ENCODE measurements at regions of chr16 and their contacts with region 1.

Region 1: DNA sequence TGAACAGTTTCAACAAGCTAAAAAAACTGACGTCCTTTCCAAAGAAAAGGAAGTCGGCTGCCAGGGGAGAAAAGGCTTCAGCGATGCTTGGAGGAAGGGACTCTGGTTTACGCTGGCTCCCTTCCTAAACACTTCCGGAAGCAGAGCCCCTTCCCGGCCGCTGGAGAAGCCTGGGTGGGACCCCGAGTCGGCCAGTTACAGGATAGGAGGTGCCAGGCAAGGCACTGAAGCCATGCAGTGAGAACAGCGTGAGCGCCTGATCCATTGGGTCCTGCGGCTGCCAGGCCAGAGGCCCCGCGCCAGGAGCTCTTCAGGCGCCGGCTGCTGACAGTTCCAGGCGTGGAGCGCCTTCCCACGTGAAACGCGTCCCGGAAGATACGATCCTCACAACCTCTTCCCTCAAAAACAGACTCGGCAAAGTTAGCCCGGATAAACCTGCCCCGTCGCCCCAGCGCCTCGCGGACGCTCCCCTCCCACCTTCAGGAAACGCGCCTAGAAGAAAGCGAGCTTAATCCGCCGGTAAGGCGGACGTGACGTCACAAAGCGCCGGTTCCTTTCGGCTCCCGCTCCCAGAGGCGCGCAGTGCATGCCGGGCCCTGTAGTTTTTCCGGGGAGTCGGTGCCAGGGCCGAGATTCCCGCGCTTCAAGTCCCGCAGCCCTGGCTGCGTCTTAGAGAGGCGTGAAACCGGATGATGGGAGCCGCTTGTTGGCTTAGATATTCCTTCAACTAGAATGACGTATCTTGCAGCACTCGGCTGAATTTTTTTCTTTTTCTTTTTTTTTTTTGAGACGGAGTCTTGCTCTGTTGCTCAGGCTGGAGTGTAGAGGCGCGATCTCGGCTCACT is at the start of gene ADAT1:
- DNase-seq: peak; percentile 99
- H3K4me3 Mint-ChIP-seq: peak within 1 kb of the TSS; percentile 95
- H3K27ac Mint-ChIP-seq: peak within 1 kb of the TSS; percentile 95
- H3K4me1 Mint-ChIP-seq: peaks cover 39% of the 10 kb centered on the region
- H3K27me3 Mint-ChIP-seq: no peaks in the 10 kb centered on the region
- total RNA-seq, gene ADAT1: 45.3 to 47.5 TPM

Region 2: GRCh38 chr16:74296432-74297144 is 1326.4 kb before region 1 on chr16 and contains the start of gene PSMD7:
- CTCF ChIA-PET with region 1: no interaction called
- intact Hi-C with region 1: loop called (anchors 2 kb)
- DNase-seq: peak; percentile 93
- H3K4me3 Mint-ChIP-seq: peak within 1 kb of the TSS; percentile 92
- H3K27ac Mint-ChIP-seq: peak within 1 kb of the TSS; percentile 93
- H3K4me1 Mint-ChIP-seq: peaks cover 32% of the 10 kb centered on the region
- H3K27me3 Mint-ChIP-seq: no peaks in the 10 kb centered on the region
- total RNA-seq, gene PSMD7: 113 to 114 TPM

Region 3: GRCh38 chr16:75148311-75149195 is 474.4 kb before region 1 on chr16 and contains the start of gene ZFP1:
- CTCF ChIA-PET with region 1: no interaction called
- intact Hi-C with region 1: loop called (anchors 2 kb)
- DNase-seq: peak; percentile 97
- H3K4me3 Mint-ChIP-seq: peak within 1 kb of the TSS; percentile 80
- H3K27ac Mint-ChIP-seq: peak within 1 kb of the TSS; percentile 73
- H3K4me1 Mint-ChIP-seq: peaks cover 37% of the 10 kb centered on the region
- H3K27me3 Mint-ChIP-seq: no peaks in the 10 kb centered on the region
- total RNA-seq, gene ZFP1: 20.2 to 20.9 TPM

Region 4: GRCh38 chr16:75392911-75393310 is 230.1 kb before region 1 on chr16:
- CTCF ChIA-PET with region 1: no interaction called
- intact Hi-C with region 1: no loop called
- DNase-seq: no peak
- H3K4me3 Mint-ChIP-seq: no peak overlapping the region
- H3K27ac Mint-ChIP-seq: no peak overlapping the region
- H3K4me1 Mint-ChIP-seq: peaks cover 1% of the 10 kb centered on the region
- H3K27me3 Mint-ChIP-seq: no peaks in the 10 kb centered on the region

Region 5: DNA sequence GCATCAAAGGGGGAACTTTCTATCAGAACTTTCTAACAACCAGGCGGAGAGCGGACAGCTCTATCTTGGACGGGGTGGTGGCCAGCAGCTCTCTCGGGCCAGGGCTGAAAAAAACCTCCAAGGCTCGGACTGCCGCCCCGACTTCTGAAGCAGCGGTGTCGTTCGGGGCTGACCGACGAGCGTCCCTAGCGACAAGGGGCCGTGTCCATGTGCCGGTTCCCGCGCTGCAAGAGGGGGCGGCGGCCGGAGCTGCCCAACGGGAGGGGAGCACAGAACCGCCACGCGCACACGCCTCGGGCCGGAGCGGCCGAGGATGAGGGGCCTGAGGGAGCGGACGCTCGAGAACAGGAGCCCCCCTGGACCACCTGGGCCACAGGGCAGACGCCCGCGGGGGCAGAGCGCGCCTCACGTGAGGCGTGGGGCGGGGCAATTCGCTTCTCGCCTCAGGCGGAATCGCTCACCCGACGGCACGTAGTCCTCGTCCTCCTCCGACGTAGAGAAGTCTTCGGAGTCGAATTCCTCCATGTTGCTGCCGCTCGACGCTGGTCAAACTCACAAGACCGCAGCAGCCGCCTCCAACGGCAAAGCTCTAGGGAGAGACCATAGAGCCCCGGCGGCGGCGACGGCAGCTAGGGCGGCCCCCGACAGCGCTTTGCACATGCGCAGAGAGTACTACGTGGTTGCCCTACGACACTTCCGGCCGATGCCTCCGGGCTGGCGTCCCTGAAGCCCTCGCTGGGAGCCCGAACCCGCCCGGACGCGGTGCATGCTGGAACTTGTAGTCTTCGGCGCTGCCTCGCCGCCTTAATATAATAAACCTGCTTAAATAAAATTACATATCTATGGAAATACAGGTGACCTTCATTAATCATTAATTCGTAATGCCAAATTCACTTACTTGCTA is 189.9 kb before region 1 on chr16 and contains the start of gene CFDP1:
- CTCF ChIA-PET with region 1: no interaction called
- intact Hi-C with region 1: loop called (anchors 1 kb)
- DNase-seq: peak; percentile 96
- H3K4me3 Mint-ChIP-seq: peak within 1 kb of the TSS; percentile 81
- H3K27ac Mint-ChIP-seq: peak within 1 kb of the TSS; percentile 93
- H3K4me1 Mint-ChIP-seq: peaks cover 30% of the 10 kb centered on the region
- H3K27me3 Mint-ChIP-seq: no peaks in the 10 kb centered on the region
- total RNA-seq, gene CFDP1: 37.2 to 44.1 TPM

Region 6: GRCh38 chr16:75566040-75566810 is 56.8 kb before region 1 on chr16 and contains the start of gene GABARAPL2:
- CTCF ChIA-PET with region 1: interaction called, 12 read pairs
- intact Hi-C with region 1: loop called (anchors 1 kb)
- DNase-seq: peak; percentile 89
- H3K4me3 Mint-ChIP-seq: peak within 1 kb of the TSS; percentile 98
- H3K27ac Mint-ChIP-seq: peak within 1 kb of the TSS; percentile 94
- H3K4me1 Mint-ChIP-seq: peaks cover 38% of the 10 kb centered on the region
- H3K27me3 Mint-ChIP-seq: peaks cover 3% of the 10 kb centered on the region
- total RNA-seq, gene GABARAPL2: 63.3 to 66.8 TPM

Region 7: DNA sequence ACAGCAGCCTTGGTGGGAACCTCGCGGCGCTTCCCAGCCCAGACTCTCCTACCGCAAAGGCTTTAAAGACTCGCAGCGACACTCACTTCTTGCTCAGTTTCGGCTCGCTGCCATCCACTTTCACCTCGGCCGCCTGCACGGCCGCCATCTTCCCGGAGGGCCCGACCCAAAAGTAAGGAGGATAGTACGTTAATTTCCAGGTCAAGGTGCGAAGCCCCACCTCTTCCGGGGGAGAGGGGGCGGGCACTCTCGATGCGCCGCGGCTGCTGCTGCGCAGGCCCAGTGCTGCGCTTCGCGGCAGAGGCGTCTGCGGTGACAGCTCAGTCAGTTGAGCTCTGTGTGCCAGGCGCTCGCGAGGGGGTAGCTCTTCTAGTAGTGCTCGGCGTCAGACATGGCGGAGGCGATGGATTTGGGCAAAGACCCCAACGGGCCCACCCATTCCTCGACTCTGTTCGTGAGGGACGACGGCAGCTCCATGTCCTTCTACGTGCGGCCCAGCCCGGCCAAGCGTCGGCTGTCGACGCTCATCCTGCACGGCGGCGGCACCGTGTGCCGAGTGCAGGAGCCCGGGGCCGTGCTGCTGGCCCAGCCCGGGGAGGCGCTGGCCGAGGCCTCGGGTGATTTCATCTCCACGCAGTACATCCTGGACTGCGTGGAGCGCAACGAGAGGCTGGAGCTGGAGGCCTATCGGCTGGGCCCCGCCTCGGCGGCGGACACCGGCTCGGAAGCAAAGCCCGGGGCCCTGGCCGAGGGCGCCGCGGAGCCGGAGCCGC is 24.7 kb after region 1 on chr16 and contains the starts of genes KARS1 and TERF2IP:
- CTCF ChIA-PET with region 1: interaction called, 10 read pairs
- intact Hi-C with region 1: loop called (anchors 1 kb)
- DNase-seq: peak; percentile 96
- H3K4me3 Mint-ChIP-seq: peak within 1 kb of the TSS; percentile 96
- H3K27ac Mint-ChIP-seq: peak within 1 kb of the TSS; percentile 98
- H3K4me1 Mint-ChIP-seq: peaks cover 62% of the 10 kb centered on the region
- H3K27me3 Mint-ChIP-seq: no peaks in the 10 kb centered on the region
- total RNA-seq, gene KARS1: 371 to 385 TPM
- total RNA-seq, gene TERF2IP: 78.6 to 79.0 TPM

Region 8: GRCh38 chr16:75695704-75696103 is 72.7 kb after region 1 on chr16:
- CTCF ChIA-PET with region 1: no interaction called
- intact Hi-C with region 1: no loop called
- DNase-seq: no peak
- H3K4me3 Mint-ChIP-seq: no peak overlapping the region
- H3K27ac Mint-ChIP-seq: no peak overlapping the region
- H3K4me1 Mint-ChIP-seq: no peaks in the 10 kb centered on the region
- H3K27me3 Mint-ChIP-seq: no peaks in the 10 kb centered on the region

Region 9: DNA sequence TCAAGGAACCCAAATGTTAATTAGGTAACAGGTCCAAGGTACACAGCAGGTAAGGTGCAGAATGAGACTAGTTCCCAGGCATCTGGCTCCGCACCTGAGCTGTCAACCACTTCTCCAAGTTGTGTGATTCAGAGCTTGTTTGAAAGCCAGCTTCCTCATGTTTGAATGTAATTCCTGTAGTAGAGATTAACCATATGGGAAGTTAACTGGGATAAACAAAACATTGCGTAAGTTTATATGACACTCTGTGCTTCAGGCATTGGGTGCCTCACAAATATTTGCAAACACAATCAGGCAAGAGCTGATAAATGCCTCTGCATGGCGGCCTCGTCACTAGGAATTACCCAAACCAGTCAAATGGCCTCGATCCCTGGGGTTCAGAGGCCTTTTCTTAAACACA is 131.2 kb after region 1 on chr16:
- CTCF ChIA-PET with region 1: no interaction called
- intact Hi-C with region 1: no loop called
- DNase-seq: no peak
- H3K4me3 Mint-ChIP-seq: no peak overlapping the region
- H3K27ac Mint-ChIP-seq: no peak overlapping the region
- H3K4me1 Mint-ChIP-seq: no peaks in the 10 kb centered on the region
- H3K27me3 Mint-ChIP-seq: peaks cover 3% of the 10 kb centered on the region

Region 10: GRCh38 chr16:77190478-77191258 is 1567.7 kb after region 1 on chr16 and contains the start of gene MON1B:
- CTCF ChIA-PET with region 1: no interaction called
- intact Hi-C with region 1: loop called (anchors 1 kb)
- DNase-seq: peak; percentile 96
- H3K4me3 Mint-ChIP-seq: peak within 1 kb of the TSS; percentile 82
- H3K27ac Mint-ChIP-seq: peak within 1 kb of the TSS; percentile 99
- H3K4me1 Mint-ChIP-seq: peaks cover 29% of the 10 kb centered on the region
- H3K27me3 Mint-ChIP-seq: no peaks in the 10 kb centered on the region
- total RNA-seq, gene MON1B: 69.6 to 71.0 TPM